Activated CD4-positive, alpha-beta memory T cell treated with anti-CD3 and anti-CD28 coated beads for 36 hours (primary cell): ENCODE measurements at regions of chr11 and their contacts with region 1.

Region 1: DNA sequence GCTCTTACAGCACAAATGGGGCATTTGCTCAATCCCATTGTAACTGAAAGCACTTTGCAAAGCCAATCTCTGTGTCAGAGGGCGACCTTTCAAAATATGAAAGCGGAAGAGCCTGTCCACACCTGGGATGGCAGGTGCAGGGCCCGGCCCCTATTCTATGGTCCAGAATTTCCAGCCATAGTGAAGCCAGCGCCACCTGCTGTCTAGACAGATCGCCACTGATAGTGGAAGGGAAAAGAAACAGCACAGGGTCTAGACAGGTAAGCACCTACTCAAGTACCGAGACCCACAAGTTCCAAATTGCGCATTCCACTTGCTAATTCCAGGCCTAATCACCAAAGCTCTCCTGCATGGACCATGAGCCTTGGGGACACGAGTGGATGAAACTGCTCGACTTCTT is 141.4 kb downstream of the NTM start:
- DNase-seq: no peak
- H3K4me3 Mint-ChIP-seq: no peak overlapping the region
- H3K27ac Mint-ChIP-seq: no peak overlapping the region
- H3K4me1 Mint-ChIP-seq: no peaks in the 10 kb centered on the region
- H3K27me3 Mint-ChIP-seq: no peaks in the 10 kb centered on the region

Region 2: GRCh38 chr11:130924770-130925169 is 587.0 kb before region 1 on chr11:
- CTCF ChIA-PET with region 1: no interaction called
- POLR2A ChIA-PET with region 1: no interaction called
- intact Hi-C with region 1: loop called (anchors 10 kb)
- DNase-seq: no peak
- H3K4me3 Mint-ChIP-seq: no peak overlapping the region
- H3K27ac Mint-ChIP-seq: no peak overlapping the region
- H3K4me1 Mint-ChIP-seq: no peaks in the 10 kb centered on the region
- H3K27me3 Mint-ChIP-seq: peaks cover 6% of the 10 kb centered on the region

Region 3: GRCh38 chr11:131600628-131601027 is 88.8 kb after region 1 on chr11:
- CTCF ChIA-PET with region 1: no interaction called
- POLR2A ChIA-PET with region 1: no interaction called
- intact Hi-C with region 1: no loop called
- DNase-seq: no peak
- H3K4me3 Mint-ChIP-seq: no peak overlapping the region
- H3K27ac Mint-ChIP-seq: no peak overlapping the region
- H3K4me1 Mint-ChIP-seq: no peaks in the 10 kb centered on the region
- H3K27me3 Mint-ChIP-seq: no peaks in the 10 kb centered on the region